ENCODE measurements at regions of chr19 and their contacts with region 1.

Region 1: DNA sequence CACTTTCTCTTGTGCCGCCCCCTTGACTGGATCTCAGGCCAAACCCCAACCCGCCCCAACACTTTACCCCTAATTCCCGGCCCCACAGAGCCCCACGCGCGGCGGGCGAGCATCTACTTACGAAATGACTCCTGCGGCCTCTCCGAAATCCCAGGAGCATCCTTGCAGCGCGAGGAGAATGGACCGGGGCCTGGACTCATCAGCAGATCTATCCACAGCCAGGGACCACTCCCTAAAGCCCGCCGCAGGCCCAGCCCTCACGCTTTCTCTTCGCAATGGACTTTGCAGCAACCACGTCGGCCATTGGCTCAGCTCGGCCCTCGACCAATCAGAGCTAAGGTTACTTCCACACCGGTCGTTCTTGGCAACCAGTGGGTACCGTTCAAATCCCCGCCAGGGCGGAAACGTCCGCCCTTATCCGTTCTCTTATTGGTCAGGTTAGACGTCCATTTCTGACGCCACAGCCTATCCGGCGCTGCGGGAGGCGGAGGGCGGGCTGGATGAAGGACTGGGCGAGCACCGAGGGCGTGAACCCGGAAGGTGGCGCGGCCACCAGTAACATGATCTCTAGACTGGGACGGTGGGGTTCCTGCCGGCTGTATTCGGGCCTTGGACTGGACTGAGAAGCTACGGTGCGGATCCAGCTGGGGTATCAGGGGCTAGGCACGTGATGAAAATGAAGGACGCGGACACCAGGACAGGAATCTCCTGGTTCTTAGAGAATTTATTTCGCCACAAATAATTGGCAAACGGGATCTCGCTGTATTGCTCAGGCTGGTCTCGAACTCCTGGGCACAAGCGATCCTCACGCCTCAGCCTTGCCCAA is at the starts of genes CEP89 and FAAP24:
- DNase-seq: peak; percentile 96 to 100 (median 98)

Region 2: GRCh38 chr19:33080761-33081681 is 109.1 kb after region 1 on chr19 and contains the start of gene GPATCH1:
- intact Hi-C with region 1: loop called (anchors 5 kb)
- DNase-seq: peak; percentile 87 to 99 (median 92)

Region 3: DNA sequence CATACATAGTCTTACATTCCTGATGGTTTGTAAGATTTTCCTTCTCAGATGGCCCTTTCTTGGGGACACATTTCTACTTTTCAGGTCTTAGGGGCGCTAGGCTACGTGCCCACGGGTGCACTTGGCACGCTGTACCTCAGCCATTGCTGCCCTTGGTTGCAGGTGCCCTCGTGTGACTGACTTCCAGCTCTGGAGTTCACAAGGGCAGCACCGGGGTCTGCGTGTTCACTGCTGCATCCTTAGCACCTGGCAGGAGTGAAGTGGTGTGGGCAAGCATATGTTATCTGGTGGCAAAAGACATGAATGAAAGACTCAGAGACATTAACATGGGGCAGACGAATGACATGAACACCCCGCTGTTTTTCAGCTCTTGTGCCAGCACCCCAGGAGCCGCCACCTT is 146.7 kb after region 1 on chr19:
- intact Hi-C with region 1: loop called (anchors 2 kb)
- DNase-seq: peak in 1 of 10 donors; percentile 34

Measured in posterior cingulate gyrus (tissue), 11 donors.